ENCODE measurements at regions of chr1 and their contacts with region 1.

Region 1: GRCh38 chr1:89804642-89805237 is 16.1 kb upstream of the LRRC8D start:
- DNase-seq: peak; percentile 71
- H3K4me3 Mint-ChIP-seq: no peak overlapping the region
- H3K27ac Mint-ChIP-seq: no peak overlapping the region
- H3K4me1 Mint-ChIP-seq: peaks cover 7% of the 10 kb centered on the region
- H3K27me3 Mint-ChIP-seq: peaks cover 4% of the 10 kb centered on the region

Region 2: GRCh38 chr1:89820422-89821321 is 15.9 kb after region 1 on chr1 and contains the start of gene LRRC8D:
- intact Hi-C with region 1: loop called (anchors 2 kb)
- DNase-seq: peak; percentile 72
- H3K4me3 Mint-ChIP-seq: peak within 1 kb of the TSS; percentile 84
- H3K27ac Mint-ChIP-seq: peak within 1 kb of the TSS; percentile 68
- H3K4me1 Mint-ChIP-seq: peaks cover 15% of the 10 kb centered on the region
- H3K27me3 Mint-ChIP-seq: peaks cover 8% of the 10 kb centered on the region
- total RNA-seq, gene LRRC8D: 43.3 and 45.0 TPM in 2 replicates

Region 3: GRCh38 chr1:89873770-89874169 is 69.0 kb after region 1 on chr1:
- intact Hi-C with region 1: no loop called
- DNase-seq: no peak
- H3K4me3 Mint-ChIP-seq: no peak overlapping the region
- H3K27ac Mint-ChIP-seq: no peak overlapping the region
- H3K4me1 Mint-ChIP-seq: peaks cover 35% of the 10 kb centered on the region
- H3K27me3 Mint-ChIP-seq: no peaks in the 10 kb centered on the region

Region 4: GRCh38 chr1:89953072-89953626 is 148.4 kb after region 1 on chr1:
- intact Hi-C with region 1: loop called (anchors 1 kb)
- DNase-seq: no peak
- H3K4me3 Mint-ChIP-seq: no peak overlapping the region
- H3K27ac Mint-ChIP-seq: no peak overlapping the region
- H3K4me1 Mint-ChIP-seq: peaks cover 47% of the 10 kb centered on the region
- H3K27me3 Mint-ChIP-seq: no peaks in the 10 kb centered on the region

Region 5: DNA sequence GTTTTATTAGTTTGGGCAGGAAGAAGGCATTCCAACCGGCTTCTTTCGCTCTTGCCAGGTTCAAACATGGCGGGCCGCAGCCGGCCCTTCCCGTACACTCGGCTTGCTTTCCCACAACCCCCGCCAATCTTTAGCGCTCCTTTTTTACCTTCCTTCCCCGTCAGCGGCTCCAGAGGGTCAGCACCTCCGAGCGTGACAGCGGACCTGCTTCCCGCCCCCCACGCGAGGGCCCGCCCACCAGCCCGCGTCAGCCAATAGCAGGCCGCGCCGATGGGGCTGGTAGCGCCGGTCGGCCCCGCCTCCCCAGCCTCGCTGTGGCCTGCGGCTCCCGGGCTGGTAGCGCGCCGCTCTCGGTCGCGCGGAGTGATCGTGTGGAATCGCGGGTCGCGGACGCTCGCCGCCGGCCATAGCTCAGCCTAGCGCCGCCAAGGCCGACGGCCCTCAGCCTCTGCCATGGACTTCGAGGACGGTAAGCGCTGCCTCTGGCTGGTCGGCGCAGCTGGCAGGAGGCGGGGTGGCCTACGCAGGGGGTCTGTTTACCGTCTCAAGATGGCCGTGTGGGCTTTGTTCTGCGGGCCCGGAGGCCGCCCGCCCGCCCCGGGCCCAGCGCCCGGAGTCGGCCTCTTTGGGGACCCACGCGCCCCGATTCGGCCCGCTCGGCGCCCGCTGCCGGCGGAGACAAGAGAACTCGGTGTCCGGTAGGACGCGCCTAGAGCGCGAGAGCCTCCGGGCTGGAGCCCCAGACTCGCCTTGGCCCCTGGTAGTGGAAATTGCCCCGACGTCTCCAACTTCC is 190.3 kb after region 1 on chr1 and contains the start of gene ZNF326:
- intact Hi-C with region 1: loop called (anchors 2 kb)
- DNase-seq: peak; percentile 93
- H3K4me3 Mint-ChIP-seq: peak within 1 kb of the TSS; percentile 99
- H3K27ac Mint-ChIP-seq: peak within 1 kb of the TSS; percentile 97
- H3K4me1 Mint-ChIP-seq: peaks cover 46% of the 10 kb centered on the region
- H3K27me3 Mint-ChIP-seq: no peaks in the 10 kb centered on the region
- total RNA-seq, gene ZNF326: 37.3 and 39.1 TPM in 2 replicates